Left cardiac atrium (tissue), 4 donors: ENCODE measurements at regions of chr10 and their contacts with region 1.

Region 1: GRCh38 chr10:14822879-14823755 is 14.7 kb downstream of the CDNF start:
- DNase-seq: peak; percentile 45
- ATAC-seq: peak in 1 of 2 donors; percentile 54

Region 2: GRCh38 chr10:14499601-14499904 is 323.6 kb before region 1 on chr10:
- intact Hi-C with region 1: loop called in 1 of 2 experiments (anchors 2 kb)
- DNase-seq: no peak
- ATAC-seq: no peak

Region 3: GRCh38 chr10:14536241-14537213 is 286.6 kb before region 1 on chr10:
- intact Hi-C with region 1: loop called in 1 of 2 experiments (anchors 10 kb)
- DNase-seq: peak; percentile 80
- ATAC-seq: peak; percentile 64 to 84

Region 4: DNA sequence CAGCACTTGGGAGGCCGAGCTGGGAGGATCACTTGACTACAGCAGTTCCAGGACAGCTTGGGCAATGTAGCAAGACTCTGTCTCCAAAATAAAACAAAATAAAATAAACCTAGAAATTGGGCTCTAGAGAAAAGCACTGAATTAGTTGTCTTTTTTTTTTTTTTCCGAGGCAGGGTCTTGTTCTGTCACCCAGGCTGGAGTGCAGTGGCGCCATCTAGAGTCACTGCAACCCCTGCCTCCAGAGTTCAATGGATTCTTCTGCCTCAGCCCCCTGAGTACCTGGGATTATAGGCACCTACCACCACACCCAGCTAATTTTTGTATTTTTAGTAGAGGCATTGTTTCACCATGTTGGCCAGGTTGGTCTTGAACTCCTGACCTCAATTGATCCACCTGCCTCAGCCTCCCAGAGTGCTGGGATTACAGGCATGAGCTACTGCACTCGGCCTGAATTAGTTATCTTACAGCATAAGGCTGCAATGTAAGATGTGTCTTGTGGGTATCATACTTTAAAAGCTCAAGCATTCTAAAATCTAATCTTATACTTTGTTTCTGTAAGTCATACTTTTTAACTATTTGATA is 148.8 kb after region 1 on chr10:
- intact Hi-C with region 1: no loop called
- DNase-seq: no peak
- ATAC-seq: no peak